Activated CD4-positive, alpha-beta T cell treated with anti-CD3 and anti-CD28 coated beads for 36 hours (primary cell): ENCODE measurements at regions of chr4 and their contacts with region 1.

Region 1: DNA sequence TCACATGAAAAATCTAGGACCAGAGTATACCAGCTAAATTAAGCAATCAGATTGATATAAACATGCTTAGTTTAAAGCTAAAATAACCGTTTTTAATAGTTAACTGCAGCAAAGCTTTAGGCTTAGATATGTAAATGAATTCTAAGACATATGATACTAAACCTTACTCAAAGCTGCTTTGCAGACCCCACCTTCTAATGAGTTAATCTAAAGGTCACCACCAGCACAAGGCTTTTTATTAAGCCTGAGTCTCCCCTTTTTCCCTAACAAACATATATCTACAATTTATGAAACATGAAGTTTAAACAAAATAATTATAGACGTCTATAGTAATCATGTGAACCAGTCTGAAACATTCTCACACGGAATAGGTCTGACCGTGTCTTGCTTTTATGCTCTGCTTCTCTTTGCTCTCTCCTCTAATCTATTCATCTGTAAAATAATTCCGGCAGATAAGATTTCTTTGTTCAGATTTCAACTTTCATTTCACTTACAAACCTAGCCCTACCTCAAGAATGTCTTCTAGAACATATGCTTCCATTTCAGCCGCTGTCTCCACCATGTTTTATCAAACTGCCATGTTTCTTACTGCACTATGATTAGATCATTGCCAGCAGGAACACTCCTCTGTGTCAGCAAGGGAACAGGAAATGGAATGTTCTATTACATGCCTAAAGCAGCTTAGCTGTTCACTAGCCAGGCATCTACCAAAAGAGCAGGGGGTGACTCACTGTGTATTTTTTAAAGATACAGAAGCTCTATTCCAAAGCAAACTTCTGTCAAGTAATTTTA is 35.9 kb downstream of the ANKRD17 start:
- DNase-seq: peak; percentile 65
- ATAC-seq: peak; percentile 100
- H3K4me3 Mint-ChIP-seq: no peak overlapping the region
- H3K27ac Mint-ChIP-seq: no peak overlapping the region
- H3K4me1 Mint-ChIP-seq: peaks cover 27% of the 10 kb centered on the region
- H3K27me3 Mint-ChIP-seq: no peaks in the 10 kb centered on the region

Region 2: GRCh38 chr4:73069338-73070073 is 153.2 kb before region 1 on chr4 and contains the start of gene COX18:
- CTCF ChIA-PET with region 1: interaction called, 3 read pairs
- POLR2A ChIA-PET with region 1: no interaction called
- intact Hi-C with region 1: loop called in 1 of 2 experiments (anchors 1 kb)
- DNase-seq: peak; percentile 96
- ATAC-seq: peak; percentile 77
- H3K4me3 Mint-ChIP-seq: peak within 1 kb of the TSS; percentile 84
- H3K27ac Mint-ChIP-seq: peak within 1 kb of the TSS; percentile 100
- H3K4me1 Mint-ChIP-seq: peaks cover 34% of the 10 kb centered on the region
- H3K27me3 Mint-ChIP-seq: no peaks in the 10 kb centered on the region
- total RNA-seq, gene COX18: 17.9 to 21.3 TPM

Region 3: DNA sequence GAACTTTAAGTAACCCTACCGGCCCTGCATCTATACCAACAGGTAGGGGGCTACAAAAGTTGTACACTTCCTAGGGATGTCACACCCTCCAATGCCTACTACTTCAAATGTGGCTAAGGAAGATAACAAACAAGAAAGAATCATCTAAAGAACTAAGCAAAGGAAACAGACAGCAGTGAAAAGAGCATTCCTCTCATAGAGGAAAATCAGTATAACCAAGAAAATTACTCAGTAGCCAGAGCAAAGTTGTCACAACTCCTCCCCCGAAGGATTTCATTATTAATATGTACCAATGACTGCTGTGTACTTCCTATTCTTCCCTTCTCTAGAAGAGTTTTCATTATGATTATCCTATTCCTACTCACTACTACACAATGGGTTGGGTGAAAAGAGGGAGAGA is 23.3 kb after region 1 on chr4:
- CTCF ChIA-PET with region 1: interaction called, 5 read pairs
- POLR2A ChIA-PET with region 1: no interaction called
- intact Hi-C with region 1: loop called in 1 of 2 experiments (anchors 2 kb)
- DNase-seq: no peak
- ATAC-seq: peak; percentile 86
- H3K4me3 Mint-ChIP-seq: no peak overlapping the region
- H3K27ac Mint-ChIP-seq: peak overlapping the region; percentile 82
- H3K4me1 Mint-ChIP-seq: peaks cover 59% of the 10 kb centered on the region
- H3K27me3 Mint-ChIP-seq: no peaks in the 10 kb centered on the region

Region 4: DNA sequence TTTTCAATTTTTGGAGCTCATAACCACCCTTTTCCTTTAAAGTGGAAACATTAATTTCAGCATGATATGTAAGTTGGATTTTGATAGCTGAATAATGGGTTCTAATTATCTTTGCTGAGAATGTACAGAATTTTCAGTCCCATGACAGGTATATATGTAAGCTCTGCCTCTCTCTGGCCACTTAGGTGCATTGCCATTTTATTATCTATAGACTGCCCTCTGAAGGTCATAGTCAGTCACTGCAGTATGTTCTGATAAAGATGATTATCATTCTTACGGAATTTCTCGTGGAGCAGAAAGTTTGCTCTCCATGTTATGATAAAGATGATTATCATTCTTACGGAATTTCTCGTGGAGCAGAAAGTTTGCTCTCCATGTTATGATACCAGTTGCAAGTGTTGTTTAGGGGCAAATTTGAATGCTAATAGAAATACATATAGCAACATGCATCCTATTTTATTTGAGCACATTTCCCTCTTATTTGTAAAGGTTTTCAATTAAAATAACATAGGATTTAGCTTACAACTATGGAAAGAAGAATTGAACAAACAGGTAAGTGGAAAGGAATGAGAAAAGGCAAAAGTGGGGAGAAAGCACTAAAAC is 223.8 kb after region 1 on chr4:
- CTCF ChIA-PET with region 1: no interaction called
- POLR2A ChIA-PET with region 1: no interaction called
- intact Hi-C with region 1: no loop called
- DNase-seq: no peak
- ATAC-seq: peak; percentile 83
- H3K4me3 Mint-ChIP-seq: no peak overlapping the region
- H3K27ac Mint-ChIP-seq: no peak overlapping the region
- H3K4me1 Mint-ChIP-seq: no peaks in the 10 kb centered on the region
- H3K27me3 Mint-ChIP-seq: peaks cover 14% of the 10 kb centered on the region